Activated naive CD4-positive, alpha-beta T cell treated with anti-CD3 and anti-CD28 coated beads for 36 hours (primary cell): ENCODE measurements at regions of chr1 and their contacts with region 1.

Region 1: GRCh38 chr1:24481101-24481500 is 21.5 kb upstream of the RCAN3 start:
- DNase-seq: peak; percentile 89
- H3K4me3 Mint-ChIP-seq: peak overlapping the region; percentile 67
- H3K27ac Mint-ChIP-seq: peak overlapping the region; percentile 99
- H3K4me1 Mint-ChIP-seq: peaks cover 70% of the 10 kb centered on the region
- H3K27me3 Mint-ChIP-seq: no peaks in the 10 kb centered on the region

Region 2: DNA sequence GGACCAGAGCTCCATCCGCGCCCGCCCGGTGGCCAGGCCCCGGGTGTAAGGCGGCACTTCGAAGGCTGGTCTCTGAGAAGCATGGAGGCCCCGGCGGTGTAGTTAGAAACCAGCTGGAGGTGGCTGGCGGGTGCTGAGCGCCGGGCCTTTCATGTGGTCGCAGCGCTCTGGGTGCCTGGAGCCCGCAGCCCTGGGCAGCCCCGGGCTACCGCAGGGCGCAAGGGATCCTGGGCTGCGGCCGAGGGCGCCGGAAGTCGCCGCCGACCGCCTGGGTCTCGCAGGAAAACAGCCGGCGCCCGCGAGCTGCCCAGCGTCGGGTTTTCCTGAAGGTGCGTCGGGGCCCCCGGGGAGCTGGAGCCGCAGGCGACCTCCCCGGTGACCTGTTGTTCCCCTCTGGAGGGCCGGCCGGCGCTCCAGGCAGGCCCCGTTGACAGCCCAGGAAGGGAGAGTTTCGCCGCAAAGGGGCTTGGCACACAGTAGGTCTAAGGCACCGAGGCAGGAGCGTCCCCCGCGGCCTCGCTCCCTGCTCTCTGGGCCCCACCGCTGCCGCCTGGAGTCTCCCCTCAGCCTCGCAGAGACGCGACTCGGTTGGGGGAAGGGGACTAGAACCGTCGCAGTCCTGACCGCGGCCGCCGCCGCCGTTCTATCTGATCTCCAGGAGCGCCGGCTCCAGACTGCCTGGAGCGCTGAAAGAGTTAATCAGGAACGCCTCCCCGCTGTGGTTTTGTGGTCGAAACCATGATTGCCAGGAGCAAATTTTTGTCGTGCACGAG is 159.2 kb before region 1 on chr1:
- CTCF ChIA-PET with region 1: no interaction called
- intact Hi-C with region 1: loop called (anchors 5 kb)
- DNase-seq: peak; percentile 88
- H3K4me3 Mint-ChIP-seq: peak overlapping the region; percentile 67
- H3K27ac Mint-ChIP-seq: no peak overlapping the region
- H3K4me1 Mint-ChIP-seq: peaks cover 41% of the 10 kb centered on the region
- H3K27me3 Mint-ChIP-seq: peaks cover 73% of the 10 kb centered on the region

Region 3: GRCh38 chr1:24491577-24492360 is 10.7 kb after region 1 on chr1:
- CTCF ChIA-PET with region 1: interaction called, 15 read pairs
- intact Hi-C with region 1: no loop called
- DNase-seq: no peak
- H3K4me3 Mint-ChIP-seq: no peak overlapping the region
- H3K27ac Mint-ChIP-seq: no peak overlapping the region
- H3K4me1 Mint-ChIP-seq: peaks cover 50% of the 10 kb centered on the region
- H3K27me3 Mint-ChIP-seq: no peaks in the 10 kb centered on the region

Region 4: DNA sequence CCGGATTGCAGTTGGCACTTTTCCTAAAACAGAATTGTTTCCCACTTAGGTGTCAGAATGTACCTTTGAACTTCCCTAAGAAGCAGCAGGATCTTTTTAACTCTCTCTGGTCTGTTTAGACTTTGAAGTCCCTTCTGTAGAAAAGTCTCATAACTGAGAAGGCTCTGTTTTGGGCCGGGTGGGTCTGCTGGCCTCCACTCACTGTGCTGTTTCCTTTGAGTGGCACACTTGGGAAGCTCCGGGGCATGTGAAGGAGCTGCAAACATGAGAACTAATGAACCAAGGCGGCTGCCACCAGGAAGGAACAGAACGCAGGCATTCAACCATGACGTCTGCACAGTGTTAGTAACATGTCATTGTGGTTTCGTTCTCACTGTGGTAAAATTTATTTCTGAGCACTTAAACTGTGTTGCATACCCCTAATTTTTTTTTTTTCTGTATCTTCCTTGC is 55.3 kb after region 1 on chr1:
- CTCF ChIA-PET with region 1: interaction called, 5 read pairs
- intact Hi-C with region 1: loop called (anchors 1 kb)
- DNase-seq: peak; percentile 84
- H3K4me3 Mint-ChIP-seq: peak overlapping the region; percentile 67
- H3K27ac Mint-ChIP-seq: peak overlapping the region; percentile 97
- H3K4me1 Mint-ChIP-seq: peaks cover 84% of the 10 kb centered on the region
- H3K27me3 Mint-ChIP-seq: no peaks in the 10 kb centered on the region

Region 5: GRCh38 chr1:24964811-24965570 is 483.9 kb after region 1 on chr1:
- CTCF ChIA-PET with region 1: no interaction called
- intact Hi-C with region 1: loop called (anchors 10 kb)
- DNase-seq: peak; percentile 97
- H3K4me3 Mint-ChIP-seq: peak overlapping the region; percentile 92
- H3K27ac Mint-ChIP-seq: peak overlapping the region; percentile 98
- H3K4me1 Mint-ChIP-seq: peaks cover 82% of the 10 kb centered on the region
- H3K27me3 Mint-ChIP-seq: no peaks in the 10 kb centered on the region

Region 6: DNA sequence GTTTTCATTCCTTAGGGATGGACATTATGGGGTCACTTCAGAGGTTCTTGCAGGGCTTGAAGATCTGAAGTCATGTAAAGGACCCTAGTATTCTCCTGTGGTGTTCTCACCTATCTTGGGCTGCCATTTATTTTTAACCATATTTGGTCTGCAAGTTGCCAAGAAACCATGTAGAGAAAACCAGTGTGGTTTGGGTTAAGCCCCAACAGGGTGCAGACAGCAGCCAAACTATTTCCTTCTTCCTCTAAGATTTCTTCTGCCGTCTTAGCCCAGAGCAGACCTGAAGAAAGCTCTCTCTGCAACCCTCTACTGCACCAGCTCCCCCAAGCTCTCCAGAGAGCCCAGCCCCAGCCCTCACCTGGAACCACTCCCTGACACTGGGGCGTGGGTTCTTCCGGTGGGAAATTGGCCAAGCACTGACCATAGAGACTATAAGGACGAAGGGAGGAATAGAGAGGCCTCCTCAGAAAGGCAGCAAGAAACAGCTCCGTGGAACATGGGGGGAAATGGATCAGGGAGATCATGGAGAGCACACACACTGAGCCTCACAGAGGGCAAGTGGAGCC is 614.6 kb after region 1 on chr1:
- CTCF ChIA-PET with region 1: no interaction called
- intact Hi-C with region 1: no loop called
- DNase-seq: no peak
- H3K4me3 Mint-ChIP-seq: no peak overlapping the region
- H3K27ac Mint-ChIP-seq: peak overlapping the region; percentile 4
- H3K4me1 Mint-ChIP-seq: peaks cover 45% of the 10 kb centered on the region
- H3K27me3 Mint-ChIP-seq: no peaks in the 10 kb centered on the region